MCF 10A (cell line): ENCODE measurements at regions of chrX and their contacts with region 1.

Region 1: DNA sequence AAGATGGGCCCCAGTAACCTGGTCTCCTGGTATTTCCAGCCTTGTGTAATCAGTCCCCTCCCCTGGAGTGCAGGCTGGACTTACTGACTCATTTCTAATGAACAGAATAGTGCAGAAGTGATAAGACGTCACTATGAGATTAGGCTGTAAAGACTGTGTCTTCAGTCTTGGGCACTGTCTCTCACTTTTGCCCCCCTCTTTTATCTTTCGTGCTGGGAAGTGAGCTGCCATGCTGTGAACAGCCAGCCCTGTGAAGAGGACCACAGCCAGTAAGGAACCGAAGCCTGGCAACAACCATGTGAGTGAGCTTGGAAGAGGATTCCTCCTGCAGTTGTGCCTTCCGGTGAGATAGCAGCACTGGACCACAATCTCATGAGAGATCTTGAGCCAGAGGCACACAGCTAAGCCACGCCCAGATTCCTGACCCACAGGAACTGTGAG is 67.5 kb upstream of the GPR34 start:
- DNase-seq: no peak
- H3K4me3 Mint-ChIP-seq: no peak overlapping the region
- H3K27ac Mint-ChIP-seq: no peak overlapping the region
- H3K4me1 Mint-ChIP-seq: no peaks in the 10 kb centered on the region
- H3K27me3 Mint-ChIP-seq: peaks cover 60% of the 10 kb centered on the region
- CTCF ChIP-seq: no peak

Region 2: DNA sequence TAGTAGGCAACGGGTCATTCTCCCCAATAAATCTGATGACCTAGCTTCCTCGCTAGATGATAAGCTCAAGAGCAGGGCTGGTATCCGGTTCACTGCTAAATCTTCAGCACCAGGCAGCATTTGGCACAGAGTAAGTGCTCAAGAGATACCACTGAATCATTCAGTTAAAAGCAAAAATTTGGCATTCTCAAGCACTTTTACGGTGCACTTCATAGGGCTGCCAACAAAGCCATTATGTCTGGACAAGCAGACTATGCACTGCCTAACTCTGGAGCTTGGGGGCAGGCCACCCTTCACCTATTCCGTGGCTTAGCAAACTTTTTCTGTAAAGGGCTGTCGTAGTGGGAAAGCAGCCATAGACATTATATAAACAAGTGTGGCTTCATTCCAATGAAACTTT is 950.1 kb before region 1 on chrX:
- CTCF ChIA-PET with region 1: no interaction called
- POLR2A ChIA-PET with region 1: no interaction called
- intact Hi-C with region 1: no loop called
- DNase-seq: no peak
- H3K4me3 Mint-ChIP-seq: no peak overlapping the region
- H3K27ac Mint-ChIP-seq: no peak overlapping the region
- H3K4me1 Mint-ChIP-seq: no peaks in the 10 kb centered on the region
- H3K27me3 Mint-ChIP-seq: peaks cover 31% of the 10 kb centered on the region
- CTCF ChIP-seq: no peak

Region 3: GRCh38 chrX:41634284-41634683 is 13.1 kb after region 1 on chrX:
- CTCF ChIA-PET with region 1: no interaction called
- POLR2A ChIA-PET with region 1: no interaction called
- intact Hi-C with region 1: loop called (anchors 1 kb)
- DNase-seq: peak; percentile 12
- H3K4me3 Mint-ChIP-seq: no peak overlapping the region
- H3K27ac Mint-ChIP-seq: no peak overlapping the region
- H3K4me1 Mint-ChIP-seq: no peaks in the 10 kb centered on the region
- H3K27me3 Mint-ChIP-seq: no peaks in the 10 kb centered on the region
- CTCF ChIP-seq: no peak